ENCODE measurements at regions of chr5 and their contacts with region 1.

Region 1: GRCh38 chr5:122845229-122846050 is at the start of gene SNX24:
- DNase-seq: peak; percentile 82
- H3K4me3 Mint-ChIP-seq: peak within 1 kb of the TSS; percentile 78
- H3K27ac Mint-ChIP-seq: peak within 1 kb of the TSS; percentile 28
- H3K4me1 Mint-ChIP-seq: peaks cover 36% of the 10 kb centered on the region
- H3K27me3 Mint-ChIP-seq: peaks cover 3% of the 10 kb centered on the region
- total RNA-seq, gene SNX24: 8.8 to 9.2 TPM

Region 2: DNA sequence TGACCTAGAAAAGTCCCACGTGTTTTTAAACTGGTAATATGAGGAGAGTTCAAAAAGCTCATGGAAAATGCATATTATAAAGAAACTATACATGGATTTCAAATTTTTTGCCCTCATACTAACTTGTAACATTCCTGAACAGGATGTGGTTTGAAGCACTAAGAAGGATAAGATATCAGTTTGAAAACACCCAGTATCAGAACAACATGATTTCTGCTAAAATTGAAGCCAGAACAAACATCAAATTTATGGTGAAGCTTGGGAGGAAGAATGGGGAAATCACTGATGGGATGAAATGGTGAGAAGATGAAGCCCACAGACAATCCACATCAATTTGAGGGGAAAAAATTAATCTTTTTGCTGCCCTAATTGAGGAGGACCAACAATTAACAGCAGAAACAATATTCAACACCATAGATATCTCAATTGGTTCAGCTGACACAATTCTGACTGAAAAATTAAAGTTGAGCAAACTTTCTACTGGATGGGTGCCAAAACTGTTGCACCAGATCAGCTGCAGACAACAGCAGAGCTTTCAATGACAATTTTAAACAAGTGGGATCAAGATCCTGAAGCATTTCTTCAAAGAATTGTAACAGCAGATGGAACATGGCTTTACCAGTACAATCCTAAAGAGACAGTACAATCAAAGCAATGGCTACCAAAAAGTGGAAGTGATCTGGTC is 183.8 kb before region 1 on chr5:
- CTCF ChIA-PET with region 1: no interaction called
- POLR2A ChIA-PET with region 1: no interaction called
- DNase-seq: no peak
- H3K4me3 Mint-ChIP-seq: no peak overlapping the region
- H3K27ac Mint-ChIP-seq: no peak overlapping the region
- H3K4me1 Mint-ChIP-seq: no peaks in the 10 kb centered on the region
- H3K27me3 Mint-ChIP-seq: peaks cover 8% of the 10 kb centered on the region

Region 3: GRCh38 chr5:122774861-122775549 is 70.4 kb before region 1 on chr5 and contains the start of gene SNX2:
- CTCF ChIA-PET with region 1: interaction called, 21 read pairs
- POLR2A ChIA-PET with region 1: interaction called, 39 read pairs
- DNase-seq: peak; percentile 89
- H3K4me3 Mint-ChIP-seq: peak within 1 kb of the TSS; percentile 88
- H3K27ac Mint-ChIP-seq: peak within 1 kb of the TSS; percentile 87
- H3K4me1 Mint-ChIP-seq: peaks cover 33% of the 10 kb centered on the region
- H3K27me3 Mint-ChIP-seq: peaks cover 14% of the 10 kb centered on the region
- total RNA-seq, gene SNX2: 52.7 to 53.0 TPM

Region 4: GRCh38 chr5:122864400-122864799 is 19.0 kb after region 1 on chr5:
- CTCF ChIA-PET with region 1: no interaction called
- POLR2A ChIA-PET with region 1: interaction called, 11 read pairs
- DNase-seq: peak; percentile 34
- H3K4me3 Mint-ChIP-seq: no peak overlapping the region
- H3K27ac Mint-ChIP-seq: peak overlapping the region; percentile 54
- H3K4me1 Mint-ChIP-seq: peaks cover 18% of the 10 kb centered on the region
- H3K27me3 Mint-ChIP-seq: no peaks in the 10 kb centered on the region

Measured in activated CD4-positive, alpha-beta memory T cell treated with anti-CD3 and anti-CD28 coated beads, Interleukin-2, amount 10 ng/mL, durations not matched to agents 7 days and 5 days (primary cell).